ENCODE measurements at regions of chr7 and their contacts with region 1.

Region 1: DNA sequence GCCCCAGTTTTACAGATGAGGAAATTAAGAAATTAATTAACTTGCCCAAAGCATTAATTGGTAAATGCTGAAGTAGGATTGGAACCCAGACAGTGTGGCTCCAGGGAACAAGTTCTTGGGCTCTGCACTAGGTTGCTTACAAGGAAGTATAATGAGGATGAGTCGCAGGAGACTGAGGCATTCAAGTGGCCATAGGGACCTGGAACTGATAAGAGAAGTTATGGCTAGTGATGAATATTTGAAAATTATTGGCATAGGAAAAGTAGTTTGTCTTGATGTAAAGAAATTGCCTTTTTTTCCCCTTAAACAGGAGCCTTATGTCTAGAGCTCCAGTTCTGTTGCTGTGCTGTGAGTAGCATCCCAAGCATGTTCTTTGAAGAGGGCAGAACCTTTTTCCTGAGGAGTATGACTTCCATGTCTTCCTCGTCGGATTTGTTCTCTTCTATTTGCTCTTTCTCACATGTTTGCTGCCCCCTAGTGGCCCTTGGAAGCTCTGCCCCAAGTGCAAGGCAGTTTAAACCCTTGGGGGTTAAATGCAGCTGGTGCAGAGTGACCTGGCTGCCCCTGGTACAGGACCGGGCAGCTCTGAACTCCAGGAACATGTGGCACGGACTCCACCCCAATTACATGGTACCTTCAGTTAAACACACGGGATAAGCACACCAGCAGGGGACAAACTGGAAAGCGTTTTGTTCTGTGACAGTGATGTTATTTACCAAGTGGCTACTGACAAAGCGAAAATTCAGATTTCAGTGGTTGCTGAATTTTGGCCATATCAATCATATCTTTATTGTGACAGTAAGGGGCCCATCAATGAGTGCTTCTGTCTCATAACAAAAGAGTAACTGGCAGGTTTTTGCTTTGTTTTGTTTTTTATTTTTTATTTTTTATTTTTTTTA is 148.8 kb downstream of the HECW1 start:
- DNase-seq: peak; percentile 79 to 82
- H3K4me3 ChIP-seq: no peak overlapping the region
- H3K4me3 Mint-ChIP-seq: no peak overlapping the region
- H3K27ac Mint-ChIP-seq: no peak overlapping the region
- H3K4me1 ChIP-seq: no peaks in the 10 kb centered on the region
- H3K4me1 Mint-ChIP-seq: no peaks in the 10 kb centered on the region
- H3K27me3 ChIP-seq: no peaks in the 10 kb centered on the region
- H3K27me3 Mint-ChIP-seq: peaks cover 2% of the 10 kb centered on the region
- CTCF ChIP-seq: peak; percentile 91 to 94

Region 2: DNA sequence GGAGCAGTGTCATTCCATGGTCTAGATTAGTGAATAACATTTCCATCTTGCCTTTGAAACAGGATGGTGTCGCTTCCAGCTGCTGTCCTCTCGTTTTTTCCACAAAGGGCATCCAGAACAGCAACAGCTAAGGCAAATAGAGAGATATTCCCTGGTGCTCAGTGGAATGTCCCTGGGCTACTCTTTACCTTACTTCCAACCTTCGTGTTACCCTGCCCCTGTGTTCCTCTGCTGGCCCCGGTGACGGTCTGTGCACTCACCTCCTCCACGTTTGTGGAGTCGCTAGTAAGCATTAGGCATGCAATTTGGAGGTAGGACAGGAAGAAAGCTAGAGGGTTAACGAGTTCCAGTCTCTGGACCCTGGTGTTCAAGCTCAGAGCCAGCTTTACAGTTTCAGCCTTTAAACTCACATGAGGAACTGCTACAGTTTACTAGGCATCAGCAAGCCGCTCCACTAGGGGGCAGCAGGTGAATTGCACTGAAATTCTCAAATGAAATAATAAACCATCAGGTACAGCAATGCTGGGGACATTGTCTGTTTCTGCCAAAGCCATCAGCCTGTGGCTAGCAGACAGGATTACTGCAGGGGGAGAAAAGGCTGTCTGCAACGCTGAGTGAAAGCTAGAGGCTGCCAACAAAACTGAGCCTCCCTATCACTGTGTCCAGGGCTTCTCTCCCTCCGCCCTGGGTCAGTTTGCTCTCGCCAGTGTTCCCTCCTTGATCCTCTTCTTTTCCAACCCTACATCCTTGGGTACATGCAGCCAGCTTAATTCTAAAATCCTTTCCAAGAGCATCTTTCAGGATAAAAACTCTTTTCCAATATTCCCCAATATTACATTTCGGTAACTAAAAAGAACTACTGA is 320.0 kb before region 1 on chr7:
- CTCF ChIA-PET with region 1: interaction called, 6 read pairs
- POLR2A ChIA-PET with region 1: no interaction called
- intact Hi-C with region 1: loop called (anchors 1 kb)
- DNase-seq: peak; percentile 74 to 78
- H3K4me3 ChIP-seq: no peak overlapping the region
- H3K4me3 Mint-ChIP-seq: no peak overlapping the region
- H3K27ac Mint-ChIP-seq: no peak overlapping the region
- H3K4me1 ChIP-seq: no peaks in the 10 kb centered on the region
- H3K4me1 Mint-ChIP-seq: no peaks in the 10 kb centered on the region
- H3K27me3 ChIP-seq: no peaks in the 10 kb centered on the region
- H3K27me3 Mint-ChIP-seq: no peaks in the 10 kb centered on the region
- CTCF ChIP-seq: peak; percentile 86 to 91

Region 3: DNA sequence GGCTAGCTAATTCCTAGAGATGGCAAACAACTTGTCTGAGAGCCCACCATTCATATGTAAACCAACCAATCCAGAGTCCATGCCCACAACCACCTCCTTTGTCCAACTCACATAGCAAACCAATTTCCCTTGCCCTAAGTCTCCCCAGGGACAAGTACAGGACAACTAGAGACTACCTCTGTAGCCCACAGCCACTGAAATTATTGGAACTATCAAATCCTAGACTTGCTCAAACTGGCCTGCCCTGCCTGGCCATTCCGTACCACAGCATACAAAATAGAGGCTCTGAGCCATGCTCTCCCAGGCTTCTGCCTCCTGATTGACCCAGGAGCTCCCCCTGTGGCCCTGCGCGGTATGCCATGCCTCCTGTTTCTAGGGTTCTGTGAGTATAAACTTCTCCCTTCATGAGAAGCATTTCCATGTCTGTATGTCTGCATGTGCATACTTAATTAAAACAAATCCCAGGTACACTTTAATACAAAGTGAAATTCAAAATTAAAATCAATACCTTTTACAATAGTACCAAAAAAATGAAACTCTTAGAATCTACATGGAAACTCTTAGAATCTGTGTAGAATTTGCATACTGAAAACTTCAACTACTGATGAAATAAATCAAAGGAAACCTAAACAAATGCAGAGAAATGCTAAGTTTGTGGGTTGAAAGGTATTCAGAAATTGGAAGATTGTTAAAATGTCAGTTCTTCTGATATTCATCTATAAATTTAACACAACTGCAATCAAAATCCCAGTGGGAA is 152.8 kb before region 1 on chr7:
- CTCF ChIA-PET with region 1: no interaction called
- POLR2A ChIA-PET with region 1: no interaction called
- intact Hi-C with region 1: loop called (anchors 2 kb)
- DNase-seq: peak; percentile 71 to 83
- H3K4me3 ChIP-seq: no peak overlapping the region
- H3K4me3 Mint-ChIP-seq: no peak overlapping the region
- H3K27ac Mint-ChIP-seq: no peak overlapping the region
- H3K4me1 ChIP-seq: no peaks in the 10 kb centered on the region
- H3K4me1 Mint-ChIP-seq: no peaks in the 10 kb centered on the region
- H3K27me3 ChIP-seq: no peaks in the 10 kb centered on the region
- H3K27me3 Mint-ChIP-seq: peaks cover 9% of the 10 kb centered on the region
- CTCF ChIP-seq: peak; percentile 77 to 93

Region 4: DNA sequence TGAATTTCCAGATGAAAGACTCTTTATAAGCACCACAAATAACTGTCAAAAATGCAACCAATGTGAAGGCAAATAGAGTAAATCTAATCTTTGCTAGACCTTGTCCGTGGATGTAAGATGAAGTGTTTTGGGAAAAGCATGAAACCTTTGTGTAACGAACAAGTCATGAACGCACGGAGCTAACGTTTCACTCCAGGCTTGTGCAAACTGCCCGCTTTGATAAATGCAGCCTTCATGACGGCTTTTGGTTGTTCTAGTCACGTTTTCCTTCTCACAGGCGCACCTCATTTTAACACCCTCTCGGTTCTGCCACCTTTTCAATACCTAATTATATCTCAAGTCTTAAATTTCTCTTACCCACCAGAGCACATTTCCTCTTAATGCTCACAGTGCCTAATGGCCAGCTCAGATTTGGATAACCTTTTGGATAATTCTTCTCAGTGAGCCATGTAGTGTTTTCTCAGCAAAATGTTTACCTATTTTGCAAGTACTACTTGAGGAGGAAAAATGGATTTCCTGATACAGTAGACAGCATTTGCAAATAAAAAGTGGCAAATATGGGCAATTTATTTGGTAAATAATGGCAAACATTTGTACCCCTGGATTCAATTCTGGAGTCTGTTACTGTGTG is 85.5 kb before region 1 on chr7:
- CTCF ChIA-PET with region 1: no interaction called
- POLR2A ChIA-PET with region 1: no interaction called
- intact Hi-C with region 1: loop called (anchors 1 kb)
- DNase-seq: no peak
- H3K4me3 ChIP-seq: no peak overlapping the region
- H3K4me3 Mint-ChIP-seq: no peak overlapping the region
- H3K27ac Mint-ChIP-seq: no peak overlapping the region
- H3K4me1 ChIP-seq: no peaks in the 10 kb centered on the region
- H3K4me1 Mint-ChIP-seq: no peaks in the 10 kb centered on the region
- H3K27me3 ChIP-seq: no peaks in the 10 kb centered on the region
- H3K27me3 Mint-ChIP-seq: peaks cover 15% of the 10 kb centered on the region
- CTCF ChIP-seq: no peak

Region 5: DNA sequence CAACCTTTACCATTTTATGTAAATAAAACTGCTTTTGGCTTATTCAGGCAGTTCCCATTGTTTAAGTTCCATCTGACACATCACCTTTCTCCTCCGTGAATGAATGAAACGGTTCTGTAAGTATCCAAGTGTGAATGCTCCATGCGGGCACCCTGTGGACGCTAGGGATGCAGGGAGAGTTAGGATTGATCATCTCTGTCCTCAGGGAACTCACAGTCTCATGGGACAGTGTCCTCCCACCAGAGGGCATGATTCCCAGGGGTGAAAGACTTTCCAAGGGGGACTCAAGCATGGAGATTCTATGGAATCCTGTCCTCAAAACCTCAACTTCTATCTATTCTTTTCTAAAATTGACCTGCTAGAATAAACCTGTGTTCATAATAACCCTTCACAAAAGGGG is 50.0 kb before region 1 on chr7:
- CTCF ChIA-PET with region 1: interaction called, 5 read pairs
- POLR2A ChIA-PET with region 1: no interaction called
- intact Hi-C with region 1: loop called (anchors 1 kb)
- DNase-seq: peak in 1 of 2 experiments; percentile 42
- H3K4me3 ChIP-seq: no peak overlapping the region
- H3K4me3 Mint-ChIP-seq: peak overlapping the region; percentile 18
- H3K27ac Mint-ChIP-seq: peak overlapping the region; percentile 79
- H3K4me1 ChIP-seq: peaks cover 17% of the 10 kb centered on the region
- H3K4me1 Mint-ChIP-seq: peaks cover 23% of the 10 kb centered on the region
- H3K27me3 ChIP-seq: no peaks in the 10 kb centered on the region
- H3K27me3 Mint-ChIP-seq: no peaks in the 10 kb centered on the region
- CTCF ChIP-seq: peak in 1 of 2 experiments; percentile 35

Region 6: DNA sequence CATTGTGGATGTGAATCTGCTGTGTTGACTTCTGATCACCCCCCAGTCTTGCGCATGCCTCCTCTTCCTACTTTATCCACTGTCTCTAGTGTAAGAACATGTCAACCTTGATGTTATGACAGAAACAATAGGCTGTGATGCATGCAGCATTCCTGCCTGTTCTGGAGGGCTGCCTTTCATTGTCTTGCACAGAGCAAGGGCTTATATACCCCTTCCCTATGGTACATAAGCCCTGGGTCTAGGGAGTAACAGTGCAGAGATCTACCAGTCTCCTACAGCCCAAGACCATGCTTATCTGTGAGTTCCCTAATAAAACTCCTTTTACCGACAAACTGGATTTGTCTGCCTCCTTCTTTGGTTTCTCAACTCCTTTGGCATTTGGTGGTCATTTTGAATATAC is 144.7 kb after region 1 on chr7:
- CTCF ChIA-PET with region 1: no interaction called
- POLR2A ChIA-PET with region 1: no interaction called
- intact Hi-C with region 1: no loop called
- DNase-seq: no peak
- H3K4me3 ChIP-seq: no peak overlapping the region
- H3K4me3 Mint-ChIP-seq: no peak overlapping the region
- H3K27ac Mint-ChIP-seq: no peak overlapping the region
- H3K4me1 ChIP-seq: no peaks in the 10 kb centered on the region
- H3K4me1 Mint-ChIP-seq: no peaks in the 10 kb centered on the region
- H3K27me3 ChIP-seq: no peaks in the 10 kb centered on the region
- H3K27me3 Mint-ChIP-seq: no peaks in the 10 kb centered on the region
- CTCF ChIP-seq: no peak

Region 7: DNA sequence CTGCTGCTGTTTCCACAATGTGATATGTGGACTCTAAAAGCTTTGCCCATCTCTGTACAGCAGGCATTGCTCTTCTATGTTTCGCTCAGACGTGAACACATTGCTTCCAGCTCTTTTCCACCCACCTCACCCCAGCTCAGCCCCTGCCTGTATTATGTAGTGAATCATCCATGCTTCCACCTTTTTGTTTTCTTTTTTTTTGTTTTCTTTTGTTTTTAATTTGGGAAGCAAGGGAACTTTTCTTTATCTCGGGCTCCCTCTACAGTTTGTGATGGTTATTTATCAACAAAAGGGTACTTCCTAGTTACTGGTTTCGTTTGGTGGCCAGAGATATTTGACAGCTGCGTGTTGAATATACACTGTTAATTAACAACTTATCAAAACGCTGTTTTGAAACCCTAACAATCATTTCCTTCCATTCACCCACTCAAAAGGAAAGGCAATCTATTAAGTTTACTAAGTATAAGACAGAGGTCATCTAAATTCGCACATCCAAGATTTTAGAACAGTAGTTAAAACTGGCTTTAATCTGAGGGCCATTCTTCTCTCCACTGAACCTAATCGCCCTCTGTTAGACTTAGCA is 193.8 kb after region 1 on chr7:
- CTCF ChIA-PET with region 1: no interaction called
- POLR2A ChIA-PET with region 1: no interaction called
- intact Hi-C with region 1: loop called (anchors 10 kb)
- DNase-seq: peak in 1 of 2 experiments; percentile 28
- H3K4me3 ChIP-seq: no peak overlapping the region
- H3K4me3 Mint-ChIP-seq: no peak overlapping the region
- H3K27ac Mint-ChIP-seq: no peak overlapping the region
- H3K4me1 ChIP-seq: peaks cover 13% of the 10 kb centered on the region; the same call in 1 of the 2 replicates
- H3K4me1 Mint-ChIP-seq: peaks cover 21% of the 10 kb centered on the region
- H3K27me3 ChIP-seq: no peaks in the 10 kb centered on the region
- H3K27me3 Mint-ChIP-seq: no peaks in the 10 kb centered on the region
- CTCF ChIP-seq: peak; percentile 45 to 50

Measured in Caco-2 (cell line).